ENCODE measurements at regions of chr5 and their contacts with region 1.

Region 1: DNA sequence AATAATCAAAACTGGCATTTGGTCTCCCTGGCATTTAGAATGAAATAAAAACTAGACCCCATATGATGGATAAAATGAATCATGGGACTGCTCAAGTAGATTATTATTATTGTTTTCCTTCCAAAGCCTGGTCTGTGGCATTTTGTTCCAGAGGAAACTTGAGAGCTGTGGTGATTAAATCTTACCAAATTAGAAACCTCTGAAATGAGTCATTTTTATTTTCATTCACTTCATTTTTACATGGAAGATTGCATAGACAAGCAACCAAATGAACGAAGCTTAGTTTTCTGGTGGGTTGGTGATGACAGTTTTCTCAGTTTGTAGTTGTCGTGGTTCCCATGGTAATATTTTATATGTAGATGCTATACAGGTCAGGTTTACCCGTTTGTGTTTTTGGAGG is 23.4 kb downstream of the PAM start:
- DNase-seq: no peak
- ATAC-seq: no peak
- H3K4me3 ChIP-seq: no peak overlapping the region
- H3K27ac ChIP-seq: peak overlapping the region; percentile 24; the same call in 1 of the 2 replicates
- H3K4me1 ChIP-seq: peaks cover 39 to 40% of the 10 kb centered on the region in 2 experiments
- H3K27me3 ChIP-seq: no peaks in the 10 kb centered on the region
- CTCF ChIP-seq: no peak
- POLR2A ChIP-seq: no peak
- RAD21 ChIP-seq: no peak

Region 2: GRCh38 chr5:102324714-102325113 is 453.8 kb before region 1 on chr5:
- CTCF ChIA-PET with region 1: no interaction called
- POLR2A ChIA-PET with region 1: no interaction called
- RAD21 ChIA-PET with region 1: no interaction called
- intact Hi-C with region 1: no loop called
- DNase-seq: no peak
- ATAC-seq: no peak
- H3K4me3 ChIP-seq: no peak overlapping the region
- H3K27ac ChIP-seq: no peak overlapping the region
- H3K4me1 ChIP-seq: no peaks in the 10 kb centered on the region
- H3K27me3 ChIP-seq: no peaks in the 10 kb centered on the region
- CTCF ChIP-seq: no peak
- POLR2A ChIP-seq: no peak
- RAD21 ChIP-seq: no peak

Region 3: GRCh38 chr5:102856389-102856777 is 77.9 kb after region 1 on chr5:
- CTCF ChIA-PET with region 1: no interaction called
- POLR2A ChIA-PET with region 1: no interaction called
- RAD21 ChIA-PET with region 1: no interaction called
- intact Hi-C with region 1: loop called (anchors 5 kb)
- DNase-seq: no peak
- ATAC-seq: peak; percentile 31; the same call in 1 of the 2 replicates
- H3K4me3 ChIP-seq: 0 out of 4 replicates have a peak overlapping the region, but pooled peaks of 1 of the 2 experiments have one; percentile 8
- H3K27ac ChIP-seq: peak overlapping the region; percentile 72
- H3K4me1 ChIP-seq: peaks cover 58 to 69% of the 10 kb centered on the region in 2 experiments
- H3K27me3 ChIP-seq: no peaks in the 10 kb centered on the region
- CTCF ChIP-seq: no peak
- POLR2A ChIP-seq: no peak
- RAD21 ChIP-seq: no peak

Region 4: GRCh38 chr5:102971697-102972293 is 193.3 kb after region 1 on chr5:
- CTCF ChIA-PET with region 1: interaction called, 6 read pairs
- POLR2A ChIA-PET with region 1: no interaction called
- RAD21 ChIA-PET with region 1: no interaction called
- intact Hi-C with region 1: loop called (anchors 2 kb)
- DNase-seq: peak; percentile 26
- ATAC-seq: peak; percentile 84
- H3K4me3 ChIP-seq: no peak overlapping the region
- H3K27ac ChIP-seq: peak overlapping the region; percentile 42; the same call in 1 of the 2 replicates
- H3K4me1 ChIP-seq: peaks cover 0 to 5% of the 10 kb centered on the region in 2 experiments; a peak in 1 of 4 replicates
- H3K27me3 ChIP-seq: no peaks in the 10 kb centered on the region
- CTCF ChIP-seq: peak; percentile 52 to 63 (median 59); a peak in 5 of 6 replicates
- POLR2A ChIP-seq: no peak
- RAD21 ChIP-seq: peak; percentile 81

Region 5: GRCh38 chr5:103041071-103041676 is 262.7 kb after region 1 on chr5:
- CTCF ChIA-PET with region 1: no interaction called
- POLR2A ChIA-PET with region 1: no interaction called
- RAD21 ChIA-PET with region 1: no interaction called
- intact Hi-C with region 1: loop called (anchors 1 kb)
- DNase-seq: peak; percentile 49
- ATAC-seq: peak; percentile 61
- H3K4me3 ChIP-seq: no peak overlapping the region
- H3K27ac ChIP-seq: no peak overlapping the region
- H3K4me1 ChIP-seq: no peaks in the 10 kb centered on the region
- H3K27me3 ChIP-seq: no peaks in the 10 kb centered on the region
- CTCF ChIP-seq: peak; percentile 24 to 83 (median 56); a peak in 5 of 6 replicates
- POLR2A ChIP-seq: no peak
- RAD21 ChIP-seq: peak; percentile 84

Region 6: DNA sequence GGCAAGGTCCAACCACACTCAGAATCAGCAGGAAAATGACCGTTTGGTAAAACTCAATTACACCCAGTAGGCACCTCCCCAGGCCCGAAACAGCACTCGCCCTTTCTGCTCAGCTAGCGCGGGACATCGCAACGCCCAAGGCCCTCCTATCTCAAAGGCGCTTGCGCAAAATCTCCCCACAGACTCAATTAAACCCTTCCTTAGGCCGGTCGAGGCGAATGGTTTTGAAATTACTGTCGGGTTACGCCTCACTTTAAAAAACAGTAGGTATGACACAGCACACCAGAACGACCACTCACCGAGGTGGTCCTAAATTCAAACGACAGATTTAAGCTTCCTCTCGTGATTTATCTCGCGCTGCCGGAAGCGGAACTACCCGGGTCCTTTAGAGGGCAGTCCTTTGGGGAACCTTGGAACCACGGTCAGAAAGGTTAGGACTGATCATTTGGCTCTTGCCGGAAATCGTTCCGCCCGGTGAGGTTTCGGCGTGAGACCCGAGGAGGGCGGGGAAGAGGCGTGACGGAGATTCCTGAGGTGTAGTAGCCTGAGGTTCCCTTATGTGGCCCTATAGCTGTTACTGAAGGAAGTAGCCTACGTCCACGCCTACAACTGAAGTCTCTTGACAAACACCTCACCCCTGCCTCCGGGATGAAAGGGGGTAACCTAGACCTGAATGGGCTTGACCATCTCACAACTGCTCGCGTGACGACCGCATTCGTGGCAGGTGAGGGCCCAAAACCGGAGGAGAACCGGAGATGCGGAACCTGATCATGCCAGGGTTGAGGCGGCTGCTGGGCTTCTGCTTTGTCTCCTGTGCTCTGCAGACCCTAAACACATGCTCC is 341.5 kb after region 1 on chr5 and contains the starts of genes GIN1 and PPIP5K2:
- CTCF ChIA-PET with region 1: no interaction called
- POLR2A ChIA-PET with region 1: no interaction called
- RAD21 ChIA-PET with region 1: no interaction called
- intact Hi-C with region 1: loop called (anchors 10 kb)
- DNase-seq: peak; percentile 99
- ATAC-seq: peak; percentile 92
- H3K4me3 ChIP-seq: peak within 1 kb of the TSS; percentile 83 to 88
- H3K27ac ChIP-seq: peak within 1 kb of the TSS; percentile 93
- H3K4me1 ChIP-seq: peaks cover 5 to 13% of the 10 kb centered on the region in 2 experiments; a peak in 3 of 4 replicates
- H3K27me3 ChIP-seq: no peaks in the 10 kb centered on the region
- CTCF ChIP-seq: no peak
- POLR2A ChIP-seq: peak; percentile 42
- RAD21 ChIP-seq: no peak
- total RNA-seq, gene GIN1: 11.0 TPM
- total RNA-seq, gene PPIP5K2: 45.8 TPM